Uterus (tissue), 4 donors: ENCODE measurements at regions of chr18 and their contacts with region 1.

Region 1: DNA sequence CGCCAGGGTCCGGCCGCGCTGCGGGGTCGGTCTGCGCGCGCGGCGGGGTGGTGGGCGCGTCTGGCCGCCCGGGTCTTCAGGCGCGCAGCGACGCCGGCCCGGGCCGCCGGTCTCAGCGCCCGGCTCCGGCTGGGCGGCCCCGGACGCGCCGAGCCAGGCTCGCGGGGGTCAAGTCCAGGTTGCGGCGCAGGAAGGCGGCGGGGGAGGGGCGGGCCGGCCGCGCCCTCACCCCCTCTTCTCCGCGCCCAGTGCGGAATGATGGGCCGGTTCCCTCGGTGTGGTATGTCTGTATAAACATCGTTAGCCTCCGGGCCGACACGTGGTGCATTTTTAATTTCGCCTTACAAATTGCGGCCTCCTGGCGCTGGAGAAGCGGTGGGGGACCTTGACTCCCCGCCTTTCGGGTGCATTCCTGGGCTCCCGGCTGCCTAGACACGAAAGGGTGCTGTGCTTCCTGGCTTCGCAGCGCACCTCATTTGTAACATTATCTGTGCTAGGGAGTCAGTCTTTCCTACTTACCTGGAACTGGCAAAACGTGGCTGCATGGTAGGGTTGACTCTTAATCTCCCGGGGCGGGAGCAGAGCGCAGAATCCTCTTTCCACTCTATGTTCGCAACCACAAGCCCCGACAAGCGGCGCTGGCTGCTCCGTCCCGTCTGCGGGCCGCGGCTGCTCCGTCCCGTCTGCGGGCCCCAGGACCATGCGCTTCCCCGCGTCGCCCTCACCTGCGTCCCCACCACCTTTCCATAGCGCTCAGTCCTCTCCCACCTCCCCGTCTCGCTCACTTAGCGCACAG is 69.0 kb downstream of the CTAGE1 start:
- DNase-seq: peak; percentile 75 to 78
- H3K4me3 ChIP-seq: peak overlapping the region; percentile 43 to 69
- H3K27ac ChIP-seq: peak overlapping the region; percentile 97 to 98
- H3K4me1 ChIP-seq: peaks cover 0 to 17% of the 10 kb centered on the region in 2 donors
- H3K27me3 ChIP-seq: no peaks in the 10 kb centered on the region
- CTCF ChIP-seq: no peak
- POLR2A ChIP-seq: peak in 1 of 2 donors; percentile 26

Region 2: GRCh38 chr18:22169007-22169864 is 179.5 kb before region 1 on chr18 and contains the start of gene GATA6:
- intact Hi-C with region 1: loop called (anchors 5 kb)
- DNase-seq: peak; percentile 93 to 95
- H3K4me3 ChIP-seq: peak within 1 kb of the TSS; percentile 89 to 96
- H3K27ac ChIP-seq: peak within 1 kb of the TSS; percentile 99 to 100
- H3K4me1 ChIP-seq: no peaks in the 10 kb centered on the region
- H3K27me3 ChIP-seq: no peaks in the 10 kb centered on the region
- CTCF ChIP-seq: peak; percentile 27 to 64 (median 60)
- POLR2A ChIP-seq: peak; percentile 81 to 90
- total RNA-seq, gene GATA6: 28.2 to 59.6 (median 39.5) TPM

Region 3: DNA sequence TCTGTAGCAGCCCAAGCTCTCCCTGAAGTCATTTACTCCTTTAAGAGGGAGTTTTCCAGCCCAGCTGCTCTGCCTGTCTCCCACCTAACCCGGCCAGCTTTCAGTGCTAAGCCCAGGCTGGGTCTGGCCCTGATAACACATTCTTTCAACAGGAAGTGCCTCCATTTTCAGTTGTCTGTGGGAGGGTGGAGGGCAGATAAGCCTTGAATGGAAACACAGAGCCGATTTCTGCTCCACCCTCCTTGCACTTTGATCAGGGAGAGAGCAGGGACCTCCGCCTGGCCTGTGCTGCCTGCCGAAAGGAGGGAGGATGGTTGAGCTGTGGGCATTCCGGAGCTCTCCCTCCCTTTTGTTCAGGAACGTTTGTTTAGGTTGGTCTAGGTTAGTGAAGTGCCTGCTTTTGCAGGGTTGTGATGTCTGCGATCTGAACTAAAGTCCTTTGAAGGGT is 154.5 kb before region 1 on chr18:
- intact Hi-C with region 1: loop called (anchors 5 kb)
- DNase-seq: no peak
- H3K4me3 ChIP-seq: no peak overlapping the region
- H3K27ac ChIP-seq: peak overlapping the region; percentile 85 to 87
- H3K4me1 ChIP-seq: peaks cover 11 to 21% of the 10 kb centered on the region in 2 donors
- H3K27me3 ChIP-seq: no peaks in the 10 kb centered on the region
- CTCF ChIP-seq: no peak
- POLR2A ChIP-seq: no peak

Region 4: GRCh38 chr18:22563098-22563707 is 214.5 kb after region 1 on chr18:
- intact Hi-C with region 1: loop called (anchors 5 kb)
- DNase-seq: peak in 1 of 2 donors; percentile 66
- H3K4me3 ChIP-seq: no peak overlapping the region
- H3K27ac ChIP-seq: peak overlapping the region; percentile 10 to 30
- H3K4me1 ChIP-seq: peaks cover 0 to 4% of the 10 kb centered on the region in 2 donors
- H3K27me3 ChIP-seq: no peaks in the 10 kb centered on the region
- CTCF ChIP-seq: peak; percentile 72 to 88 (median 80)
- POLR2A ChIP-seq: no peak